Calu3 (cell line): ENCODE measurements at regions of chr1 and their contacts with region 1.

Region 1: DNA sequence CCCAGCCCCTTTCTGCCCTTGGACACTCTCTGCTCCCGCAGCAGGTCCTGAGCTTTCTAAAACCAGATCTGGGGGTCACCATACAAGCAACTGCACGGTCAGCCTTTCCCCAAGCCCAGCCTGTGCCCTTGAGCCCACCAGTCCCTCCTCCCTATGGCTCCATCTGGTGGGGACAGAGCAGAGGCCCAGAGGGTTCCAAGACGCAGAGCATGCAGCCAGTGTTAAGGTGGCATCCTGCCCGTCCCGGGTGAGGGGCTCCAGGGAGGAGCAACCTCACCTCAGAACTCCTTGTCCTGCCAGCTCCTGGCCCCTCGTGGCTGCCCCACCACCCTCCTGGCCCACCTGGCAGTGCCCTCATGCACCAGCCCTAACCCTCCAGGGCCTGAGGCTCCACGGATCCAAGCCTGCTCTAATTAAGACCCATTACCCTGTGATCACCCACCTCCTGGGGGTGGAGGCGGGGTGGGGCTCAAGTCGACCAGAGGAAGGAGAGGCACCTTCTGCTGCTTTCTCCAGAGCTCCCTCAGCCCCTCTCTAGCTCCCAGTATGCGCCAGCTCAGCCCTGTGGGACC is 8.5 kb downstream of the CHD5 start:
- DNase-seq: peak; percentile 48
- H3K4me3 Mint-ChIP-seq: no peak overlapping the region
- H3K27ac Mint-ChIP-seq: no peak overlapping the region
- H3K4me1 Mint-ChIP-seq: peaks cover 8% of the 10 kb centered on the region
- H3K27me3 Mint-ChIP-seq: peaks cover 41% of the 10 kb centered on the region
- CTCF ChIP-seq: peak; percentile 24

Region 2: DNA sequence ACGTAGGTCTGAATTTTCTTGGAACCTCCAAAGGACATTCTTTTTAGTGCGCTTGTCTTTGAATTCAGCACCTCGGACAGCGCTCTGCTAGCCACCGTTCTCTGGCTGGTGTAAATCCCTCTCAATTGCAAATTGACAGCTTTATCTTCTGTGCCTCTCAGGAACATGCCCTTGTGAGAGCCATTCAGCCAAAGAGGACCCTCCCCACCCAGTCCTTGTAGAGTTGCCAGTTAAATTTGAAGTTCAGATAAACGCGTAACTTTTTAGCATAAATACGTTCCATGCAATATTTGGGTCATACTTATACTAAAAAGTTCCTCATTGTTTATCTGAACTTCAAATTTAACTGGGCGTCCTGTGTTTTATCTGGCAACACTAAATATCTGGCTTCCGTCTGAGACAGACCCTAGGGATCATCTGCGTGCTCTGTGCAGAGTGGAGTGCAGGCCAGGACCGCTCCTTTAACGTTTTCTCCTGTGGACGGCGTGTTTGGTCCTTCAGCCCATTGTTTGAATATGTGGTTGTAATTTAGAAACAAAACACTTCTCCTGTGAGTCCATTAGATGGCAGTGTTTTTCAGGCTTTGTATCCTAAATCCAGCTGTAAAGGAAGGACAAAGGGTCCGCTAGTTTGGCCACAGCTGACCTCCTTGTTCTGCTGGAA is 119.0 kb before region 1 on chr1:
- CTCF ChIA-PET with region 1: no interaction called
- intact Hi-C with region 1: loop called (anchors 10 kb)
- DNase-seq: peak; percentile 54
- H3K4me3 Mint-ChIP-seq: no peak overlapping the region
- H3K27ac Mint-ChIP-seq: no peak overlapping the region
- H3K4me1 Mint-ChIP-seq: peaks cover 7% of the 10 kb centered on the region
- H3K27me3 Mint-ChIP-seq: peaks cover 34% of the 10 kb centered on the region
- CTCF ChIP-seq: peak; percentile 36

Region 3: DNA sequence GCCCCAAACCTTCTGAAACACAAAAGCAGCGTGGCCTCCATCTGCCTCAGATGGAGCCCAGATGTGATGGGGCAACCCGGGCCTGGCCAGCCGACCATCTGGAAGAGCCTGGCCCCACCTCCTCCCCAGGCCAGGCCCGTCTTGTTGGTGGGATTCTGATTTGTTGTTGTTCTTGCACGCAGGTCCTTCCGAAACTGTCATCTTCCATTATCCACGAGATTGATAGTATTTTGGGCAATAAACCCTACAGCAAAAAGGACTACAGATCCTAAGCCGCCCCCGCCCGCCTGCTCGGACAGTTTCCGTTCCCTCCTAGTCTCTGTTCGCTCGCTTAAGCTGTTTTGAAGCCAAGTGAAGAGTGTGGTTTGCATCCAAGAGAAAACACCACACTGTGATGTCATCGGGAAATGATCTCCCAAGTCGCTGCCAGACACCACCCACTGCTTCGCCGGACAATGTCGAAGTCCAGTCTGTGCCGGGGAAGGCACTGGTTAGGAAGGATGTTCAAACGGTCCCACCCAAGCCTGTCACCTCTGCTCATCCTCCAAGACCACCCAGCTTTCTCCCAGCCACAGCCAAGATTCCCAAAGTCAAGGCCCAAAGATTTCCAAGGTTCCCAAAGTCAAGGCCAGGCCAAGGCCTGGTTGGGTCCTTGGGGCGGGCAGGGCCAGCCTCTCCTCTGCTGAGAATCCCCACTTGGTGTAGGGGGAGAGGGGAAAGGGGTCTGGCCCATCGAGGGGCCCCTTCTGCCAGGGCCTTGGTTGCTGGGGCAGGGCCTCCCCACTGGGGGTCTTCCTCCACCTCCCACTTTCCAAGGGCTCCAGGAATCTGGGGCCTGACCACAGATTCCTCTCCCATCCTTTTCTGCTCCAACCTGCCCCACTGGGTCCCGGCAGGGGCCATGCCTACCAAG is 73.1 kb before region 1 on chr1:
- CTCF ChIA-PET with region 1: no interaction called
- intact Hi-C with region 1: no loop called
- DNase-seq: no peak
- H3K4me3 Mint-ChIP-seq: no peak overlapping the region
- H3K27ac Mint-ChIP-seq: no peak overlapping the region
- H3K4me1 Mint-ChIP-seq: no peaks in the 10 kb centered on the region
- H3K27me3 Mint-ChIP-seq: peaks cover 53% of the 10 kb centered on the region
- CTCF ChIP-seq: no peak

Region 4: GRCh38 chr1:6108937-6109614 is 62.6 kb before region 1 on chr1:
- CTCF ChIA-PET with region 1: interaction called, 5 read pairs
- intact Hi-C with region 1: loop called (anchors 2 kb)
- DNase-seq: peak; percentile 66
- H3K4me3 Mint-ChIP-seq: no peak overlapping the region
- H3K27ac Mint-ChIP-seq: no peak overlapping the region
- H3K4me1 Mint-ChIP-seq: no peaks in the 10 kb centered on the region
- H3K27me3 Mint-ChIP-seq: peaks cover 70% of the 10 kb centered on the region
- CTCF ChIP-seq: no peak

Region 5: DNA sequence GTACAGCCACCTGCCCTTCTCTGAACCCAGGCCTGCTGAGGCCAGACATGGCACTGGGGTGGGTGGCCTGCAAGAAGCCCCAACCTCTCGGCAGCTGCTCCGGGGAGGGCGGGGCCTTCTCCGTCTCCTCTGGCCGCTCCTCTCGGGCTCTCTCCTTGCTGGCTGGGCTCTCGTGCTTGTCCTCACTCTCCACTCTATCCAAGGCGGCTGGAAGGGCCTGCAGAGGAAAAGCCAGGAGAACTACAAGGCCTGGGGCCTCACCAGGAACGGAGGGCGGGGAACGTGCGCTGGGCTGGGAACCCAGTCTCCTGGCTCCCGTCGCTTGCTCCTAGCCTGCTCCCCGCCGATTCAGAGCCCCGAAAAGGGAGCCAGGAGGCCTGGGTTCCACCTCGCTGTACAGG is 50.6 kb before region 1 on chr1:
- CTCF ChIA-PET with region 1: no interaction called
- intact Hi-C with region 1: no loop called
- DNase-seq: no peak
- H3K4me3 Mint-ChIP-seq: no peak overlapping the region
- H3K27ac Mint-ChIP-seq: no peak overlapping the region
- H3K4me1 Mint-ChIP-seq: no peaks in the 10 kb centered on the region
- H3K27me3 Mint-ChIP-seq: peaks cover 11% of the 10 kb centered on the region
- CTCF ChIP-seq: no peak